ENCODE measurements at regions of chr3 and their contacts with region 1.

Region 1: DNA sequence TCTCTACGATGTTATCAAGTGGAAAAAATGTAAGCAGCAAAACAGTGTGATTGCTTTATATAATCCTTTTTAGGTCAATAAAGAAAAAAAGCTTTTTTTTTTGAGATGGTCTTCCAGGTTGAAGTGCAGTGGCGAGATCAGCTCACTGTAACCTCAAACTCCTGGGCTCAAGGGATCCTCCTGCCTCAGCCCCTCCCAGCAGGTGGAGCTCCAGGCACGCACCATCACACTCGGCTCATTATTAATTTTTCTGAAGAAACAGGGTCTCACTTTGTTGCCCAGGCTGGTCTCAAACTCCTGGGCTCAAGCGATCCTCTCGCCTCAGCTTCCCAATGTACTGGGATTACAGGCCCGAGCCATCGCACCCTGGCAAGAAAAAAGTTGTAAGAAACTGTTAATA is 17.3 kb downstream of the RNF168 start:
- DNase-seq: no peak
- H3K4me3 ChIP-seq: no peak overlapping the region
- H3K27ac ChIP-seq: no peak overlapping the region
- H3K4me1 ChIP-seq: no peaks in the 10 kb centered on the region
- H3K27me3 ChIP-seq: no peaks in the 10 kb centered on the region
- CTCF ChIP-seq: peak; percentile 3 to 58

Region 2: DNA sequence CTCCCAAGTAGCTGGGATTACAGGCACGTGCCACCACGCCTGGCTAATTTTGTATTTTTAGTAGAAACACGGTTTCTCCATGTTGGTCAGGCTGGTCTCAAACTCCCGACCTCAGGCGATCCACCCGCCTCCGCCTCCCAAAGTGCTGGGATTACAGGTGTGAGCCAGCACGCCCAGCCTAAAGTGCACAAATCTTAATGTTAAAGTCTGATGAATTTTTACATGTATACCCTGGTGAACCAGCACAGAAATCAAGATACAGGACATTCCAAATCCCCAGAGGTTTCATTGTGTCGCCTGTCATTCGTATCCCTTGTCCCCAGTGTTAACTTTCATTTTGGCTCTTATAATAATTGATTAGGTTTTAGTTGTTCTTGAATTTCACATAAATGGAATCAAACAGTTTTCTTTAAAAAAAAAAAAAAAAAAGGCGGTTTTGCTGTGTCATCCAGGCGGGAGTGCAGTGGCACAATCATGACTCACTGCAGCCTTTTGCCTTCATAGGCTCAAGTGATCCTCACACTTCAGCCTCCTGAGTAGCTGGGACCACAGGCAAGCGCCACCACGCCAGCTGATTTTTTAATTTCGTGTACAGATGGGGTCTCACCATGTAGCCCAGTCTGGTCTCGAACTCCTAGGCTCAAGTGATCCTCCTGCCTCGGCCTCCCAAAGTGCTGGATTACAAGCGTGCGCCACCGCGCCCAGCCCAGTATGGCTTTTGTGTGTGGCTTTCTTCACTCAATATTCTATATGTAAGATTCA is 146.6 kb before region 1 on chr3:
- CTCF ChIA-PET with region 1: no interaction called
- dilution Hi-C with region 1: no loop called
- in situ Hi-C with region 1: no loop called
- intact Hi-C with region 1: no loop called
- DNase-seq: peak; percentile 53
- H3K4me3 ChIP-seq: no peak overlapping the region
- H3K27ac ChIP-seq: peak overlapping the region; percentile 61
- H3K4me1 ChIP-seq: peaks cover 35% of the 10 kb centered on the region
- H3K27me3 ChIP-seq: no peaks in the 10 kb centered on the region
- CTCF ChIP-seq: no peak

Region 3: DNA sequence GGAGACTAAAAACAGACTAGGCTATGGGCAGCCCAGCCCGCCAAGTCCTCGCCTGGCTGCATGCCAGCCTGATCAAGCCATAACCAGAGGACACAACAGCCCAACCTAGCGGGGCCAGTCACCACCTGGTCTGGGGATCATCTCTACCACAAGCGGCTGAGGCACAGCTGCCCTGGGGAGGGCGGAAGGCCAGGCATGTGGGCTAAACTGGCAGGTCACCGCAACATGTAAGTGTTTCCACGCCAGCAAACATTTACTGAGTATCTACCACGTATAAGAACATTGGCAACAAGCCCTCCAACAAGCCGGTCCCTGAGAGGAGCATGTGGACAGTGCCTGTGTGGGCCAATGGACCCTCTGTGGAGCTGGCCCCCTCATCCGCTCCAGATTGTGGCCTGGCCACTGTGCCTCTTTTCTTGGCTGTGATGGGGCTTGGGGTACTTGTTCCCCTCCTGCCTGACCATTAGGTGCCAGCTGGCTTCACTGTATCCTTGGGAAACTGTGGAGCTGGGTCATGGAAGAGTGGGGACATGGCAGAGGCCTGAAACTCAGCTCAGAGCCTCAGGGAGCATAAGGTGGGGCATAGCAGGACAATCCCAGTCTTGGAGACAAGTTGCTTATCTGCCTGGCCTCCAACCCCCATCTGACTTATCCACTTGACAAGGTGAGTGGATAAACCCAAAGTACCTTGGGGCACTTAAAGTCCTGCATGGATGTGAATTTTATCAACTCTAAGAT is 63.0 kb before region 1 on chr3:
- CTCF ChIA-PET with region 1: no interaction called
- dilution Hi-C with region 1: loop called (anchors 5 kb)
- in situ Hi-C with region 1: no loop called
- intact Hi-C with region 1: no loop called
- DNase-seq: peak; percentile 40
- H3K4me3 ChIP-seq: no peak overlapping the region
- H3K27ac ChIP-seq: no peak overlapping the region
- H3K4me1 ChIP-seq: peaks cover 9% of the 10 kb centered on the region
- H3K27me3 ChIP-seq: no peaks in the 10 kb centered on the region
- CTCF ChIP-seq: no peak

Region 4: GRCh38 chr3:196513697-196514349 is 27.6 kb after region 1 on chr3:
- CTCF ChIA-PET with region 1: interaction called, 36 read pairs
- dilution Hi-C with region 1: no loop called
- in situ Hi-C with region 1: no loop called
- intact Hi-C with region 1: loop called (anchors 1 kb)
- DNase-seq: no peak
- H3K4me3 ChIP-seq: no peak overlapping the region
- H3K27ac ChIP-seq: no peak overlapping the region
- H3K4me1 ChIP-seq: peaks cover 3% of the 10 kb centered on the region
- H3K27me3 ChIP-seq: no peaks in the 10 kb centered on the region
- CTCF ChIP-seq: no peak

Region 5: DNA sequence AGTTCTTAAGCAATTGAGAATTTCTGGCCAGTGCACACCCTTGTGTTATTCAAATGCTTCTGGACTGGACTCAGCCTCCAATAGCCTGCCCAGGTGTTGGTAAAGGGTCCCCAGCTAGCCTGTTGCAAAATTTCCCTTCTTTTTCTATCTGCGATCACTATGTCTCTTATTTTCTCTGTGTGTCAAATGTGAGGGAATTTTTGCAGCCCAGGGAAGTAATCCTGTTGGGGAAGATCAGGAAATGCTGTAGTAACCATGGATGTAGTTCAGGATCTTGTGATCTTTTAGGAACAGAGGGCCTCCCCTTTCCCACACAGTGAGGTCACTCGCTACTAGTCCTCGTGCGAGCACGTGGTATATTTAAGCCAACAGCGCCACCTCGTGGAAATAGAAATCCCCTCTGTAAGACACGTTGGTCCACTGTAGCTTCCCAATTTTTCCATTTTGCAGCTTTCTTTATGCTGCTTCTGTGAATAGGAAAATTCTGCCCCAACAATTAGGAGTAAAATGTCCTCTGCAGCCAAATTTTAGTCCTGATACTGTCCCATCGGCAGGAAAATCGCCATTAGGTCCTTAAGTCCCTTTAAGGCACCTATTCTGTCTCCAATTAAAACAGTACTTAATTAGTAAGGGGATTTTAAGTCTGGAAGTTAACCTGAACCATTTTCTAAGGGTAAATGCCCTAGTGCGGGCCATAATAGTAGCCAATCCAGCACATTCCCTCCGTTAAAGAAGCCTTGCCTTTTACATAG is 32.9 kb after region 1 on chr3:
- CTCF ChIA-PET with region 1: interaction called, 36 read pairs
- dilution Hi-C with region 1: no loop called
- in situ Hi-C with region 1: no loop called
- intact Hi-C with region 1: loop called (anchors 1 kb)
- DNase-seq: peak; percentile 63
- H3K4me3 ChIP-seq: no peak overlapping the region
- H3K27ac ChIP-seq: no peak overlapping the region
- H3K4me1 ChIP-seq: no peaks in the 10 kb centered on the region
- H3K27me3 ChIP-seq: no peaks in the 10 kb centered on the region
- CTCF ChIP-seq: peak; percentile 54 to 66